ENCODE measurements at regions of chr9 and their contacts with region 1.

Region 1: GRCh38 chr9:136118320-136119060 is at the start of gene TMEM250:
- DNase-seq: peak; percentile 93 to 95
- ATAC-seq: peak; percentile 75 to 83
- H3K4me3 ChIP-seq: peak within 1 kb of the TSS; percentile 71 to 97 (median 84)
- H3K27ac ChIP-seq: peak within 1 kb of the TSS; percentile 93 to 100 (median 97)
- H3K4me1 ChIP-seq: peaks cover 19 to 27% of the 10 kb centered on the region in 2 donors
- H3K27me3 ChIP-seq: no peaks in the 10 kb centered on the region
- CTCF ChIP-seq: peak in 4 of 5 experiments; percentile 14 to 71 (median 52)
- POLR2A ChIP-seq: no peak
- total RNA-seq, gene TMEM250: 25.7 to 46.9 (median 41.5) TPM

Region 2: GRCh38 chr9:135701959-135702721 is 416.4 kb before region 1 on chr9 and contains the start of gene KCNT1:
- in situ Hi-C with region 1: no loop called
- intact Hi-C with region 1: loop called (anchors 5 kb)
- DNase-seq: no peak
- ATAC-seq: peak; percentile 68 to 73
- H3K4me3 ChIP-seq: peak within 1 kb of the TSS in 3 of 4 donors; percentile 34 to 50 (median 39)
- H3K27ac ChIP-seq: no peak within 1 kb of the TSS
- H3K4me1 ChIP-seq: peaks cover 0 to 8% of the 10 kb centered on the region in 2 donors
- H3K27me3 ChIP-seq: peaks cover 0 to 3% (median 0%) of the 10 kb centered on the region in 3 donors
- CTCF ChIP-seq: peak; percentile 76 to 96 (median 85)
- POLR2A ChIP-seq: no peak
- total RNA-seq, gene KCNT1: 2.3 to 8.7 (median 5.3) TPM

Region 3: DNA sequence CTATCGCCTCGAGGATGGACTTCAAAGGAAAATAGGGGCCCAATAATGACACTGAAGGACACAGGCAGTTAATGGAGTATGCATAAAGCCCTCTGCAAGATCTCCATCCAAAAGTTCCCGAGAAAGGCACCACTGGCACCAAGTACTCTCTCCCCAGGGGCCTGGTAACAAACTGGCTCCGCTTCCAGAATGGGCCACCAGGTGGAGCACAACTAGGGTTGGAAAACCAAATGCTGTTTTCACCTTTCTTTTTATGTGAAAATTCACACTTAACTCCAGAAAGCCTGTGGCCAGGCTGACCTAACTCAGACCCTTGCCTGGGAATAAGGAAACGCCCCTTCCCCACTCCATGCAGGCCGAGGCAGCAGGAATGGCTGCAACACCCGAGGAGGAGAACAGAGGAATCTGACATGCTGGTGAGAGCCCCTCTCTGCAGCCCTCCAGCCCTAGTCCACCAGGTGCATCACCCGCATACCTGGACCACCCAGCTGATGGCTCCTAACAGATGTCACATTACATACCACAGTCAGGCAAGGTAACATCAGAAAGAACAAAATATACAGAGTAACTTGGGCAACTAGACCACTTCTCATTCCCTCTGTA is 253.9 kb before region 1 on chr9:
- in situ Hi-C with region 1: no loop called
- intact Hi-C with region 1: loop called (anchors 1 kb)
- DNase-seq: peak in 1 of 2 donors; percentile 39
- ATAC-seq: peak in 1 of 2 donors; percentile 64
- H3K4me3 ChIP-seq: no peak overlapping the region
- H3K27ac ChIP-seq: no peak overlapping the region
- H3K4me1 ChIP-seq: peaks cover 4 to 9% of the 10 kb centered on the region in 2 donors
- H3K27me3 ChIP-seq: no peaks in the 10 kb centered on the region
- CTCF ChIP-seq: peak; percentile 64 to 88 (median 81)
- POLR2A ChIP-seq: no peak

Region 4: DNA sequence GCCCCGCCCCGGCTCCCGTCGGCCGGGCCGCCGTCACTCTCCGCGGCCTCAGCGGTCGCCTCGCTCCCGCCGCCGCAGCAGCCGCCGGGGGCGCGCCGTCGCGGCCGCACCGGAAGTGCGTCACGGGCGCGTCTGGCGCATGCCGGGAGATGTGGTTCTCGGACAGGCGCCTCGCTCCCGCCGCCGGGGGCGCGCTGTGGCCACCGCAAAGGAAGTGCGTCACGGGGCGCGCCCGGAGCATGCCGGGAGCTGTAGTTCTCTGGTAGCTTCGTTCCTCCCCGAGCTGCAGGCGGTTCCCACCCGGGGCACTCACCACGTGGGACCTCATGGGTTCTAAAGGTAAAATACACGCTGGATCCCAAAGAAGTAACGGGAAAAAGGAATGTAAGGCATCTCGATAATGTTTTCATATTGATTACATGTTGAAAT is 157.2 kb before region 1 on chr9 and contains the start of gene UBAC1:
- in situ Hi-C with region 1: loop called (anchors 5 kb)
- intact Hi-C with region 1: loop called (anchors 1 kb)
- DNase-seq: peak; percentile 93 to 96
- ATAC-seq: peak; percentile 37 to 55
- H3K4me3 ChIP-seq: peak within 1 kb of the TSS; percentile 87 to 99 (median 95)
- H3K27ac ChIP-seq: peak within 1 kb of the TSS; percentile 97 to 100 (median 100)
- H3K4me1 ChIP-seq: peaks cover 26 to 37% of the 10 kb centered on the region in 2 donors
- H3K27me3 ChIP-seq: no peaks in the 10 kb centered on the region
- CTCF ChIP-seq: peak; percentile 44 to 66 (median 57)
- POLR2A ChIP-seq: no peak
- total RNA-seq, gene UBAC1: 218 to 263 (median 248) TPM

Region 5: GRCh38 chr9:136024696-136025316 is 93.7 kb before region 1 on chr9:
- in situ Hi-C with region 1: no loop called
- intact Hi-C with region 1: loop called (anchors 5 kb)
- DNase-seq: no peak
- ATAC-seq: no peak
- H3K4me3 ChIP-seq: no peak overlapping the region
- H3K27ac ChIP-seq: peak overlapping the region in 2 of 4 donors; percentile 32 to 65
- H3K4me1 ChIP-seq: peaks cover 45 to 55% of the 10 kb centered on the region in 2 donors
- H3K27me3 ChIP-seq: no peaks in the 10 kb centered on the region
- CTCF ChIP-seq: no peak
- POLR2A ChIP-seq: no peak

Region 6: DNA sequence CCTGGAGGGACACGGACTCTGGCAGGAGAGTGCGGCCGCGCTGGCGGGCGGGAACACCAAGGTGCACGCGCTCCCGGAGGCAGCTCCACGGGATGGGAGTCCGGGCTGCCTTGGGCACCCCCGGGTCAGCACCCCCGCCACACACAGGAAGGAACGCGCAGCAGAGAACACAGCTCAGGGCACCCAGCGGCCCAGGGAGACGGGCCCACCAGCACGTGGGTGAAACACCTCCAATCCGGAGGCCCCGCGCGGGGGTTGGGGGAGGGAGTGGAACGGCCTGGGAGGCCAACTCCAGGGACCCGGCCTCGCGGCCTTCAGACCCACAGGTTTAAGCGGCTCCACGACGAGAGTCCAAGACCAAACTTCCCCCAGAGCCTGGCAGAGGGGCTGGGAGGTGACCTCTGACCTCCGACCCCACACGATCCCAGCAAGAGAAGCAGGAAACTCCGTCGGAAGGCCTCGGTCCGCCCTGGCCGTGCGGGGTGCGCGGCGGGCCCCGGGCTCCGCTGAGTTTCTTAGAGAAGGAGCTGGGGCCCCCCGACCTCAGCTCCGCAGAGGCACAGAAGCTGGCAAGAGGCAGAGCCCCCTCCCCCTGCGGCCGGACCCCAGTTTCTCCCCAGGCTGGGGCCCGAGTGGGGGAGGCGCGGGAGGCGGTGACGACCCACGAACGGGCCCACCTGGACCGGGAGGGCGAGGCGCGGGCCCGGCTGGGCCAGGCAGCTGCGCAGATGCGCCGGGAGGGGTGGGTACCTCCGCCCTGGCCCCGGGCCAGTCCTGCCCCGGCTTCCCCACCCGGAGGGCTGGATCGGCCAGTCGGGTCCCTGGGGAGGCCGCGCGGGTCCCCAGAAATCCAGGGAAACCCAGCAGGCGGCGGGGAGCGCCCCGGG is 24.3 kb before region 1 on chr9:
- in situ Hi-C with region 1: no loop called
- intact Hi-C with region 1: loop called (anchors 1 kb)
- DNase-seq: peak; percentile 91 to 93
- ATAC-seq: peak; percentile 51 to 57
- H3K4me3 ChIP-seq: peak overlapping the region; percentile 67 to 90 (median 78)
- H3K27ac ChIP-seq: peak overlapping the region; percentile 95 to 100 (median 98)
- H3K4me1 ChIP-seq: peaks cover 51 to 57% of the 10 kb centered on the region in 2 donors
- H3K27me3 ChIP-seq: no peaks in the 10 kb centered on the region
- CTCF ChIP-seq: peak in 2 of 5 experiments; percentile 24 to 27
- POLR2A ChIP-seq: peak; percentile 78 to 86

Region 7: DNA sequence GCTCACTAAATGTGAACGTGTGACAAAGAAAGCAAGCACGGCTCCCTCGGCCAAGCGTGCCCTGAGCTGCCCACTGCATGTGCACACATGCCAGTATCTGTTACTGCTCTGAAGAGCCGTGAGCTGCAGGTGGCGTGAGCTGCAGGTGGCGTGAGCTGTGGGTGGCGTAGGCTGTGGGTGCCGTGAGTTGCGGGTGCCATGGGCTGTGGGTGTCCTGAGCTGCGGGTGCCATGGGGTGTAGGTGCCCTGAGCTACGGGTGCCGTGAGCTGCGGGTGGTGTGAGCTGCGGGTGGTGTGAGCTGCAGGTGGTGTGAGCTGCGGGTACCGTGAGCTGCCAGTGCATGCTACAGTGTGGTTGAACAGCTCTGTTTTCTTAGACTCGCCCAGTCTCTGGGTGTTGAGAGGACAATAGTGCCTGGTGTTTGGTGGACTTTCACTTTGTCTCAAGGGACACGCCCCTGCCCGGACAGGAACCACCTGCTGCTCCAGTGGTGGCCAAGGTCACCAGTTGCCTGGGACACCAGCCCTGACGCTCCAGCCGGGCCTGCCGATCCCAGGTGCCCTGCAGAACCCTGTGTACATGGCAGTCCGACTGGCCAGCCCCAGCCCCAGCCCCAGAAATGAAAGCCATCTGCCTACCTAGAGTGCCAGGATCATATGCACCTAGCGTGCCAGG is 178.7 kb after region 1 on chr9:
- in situ Hi-C with region 1: no loop called
- intact Hi-C with region 1: no loop called
- DNase-seq: no peak
- ATAC-seq: no peak
- H3K4me3 ChIP-seq: no peak overlapping the region
- H3K27ac ChIP-seq: no peak overlapping the region
- H3K4me1 ChIP-seq: no peaks in the 10 kb centered on the region
- H3K27me3 ChIP-seq: peaks cover 6 to 10% (median 8%) of the 10 kb centered on the region in 3 donors
- CTCF ChIP-seq: no peak
- POLR2A ChIP-seq: no peak

Measured in gastrocnemius medialis (tissue), 4 donors.